A673 (cell line): ENCODE measurements at regions of chr7 and their contacts with region 1.

Region 1: DNA sequence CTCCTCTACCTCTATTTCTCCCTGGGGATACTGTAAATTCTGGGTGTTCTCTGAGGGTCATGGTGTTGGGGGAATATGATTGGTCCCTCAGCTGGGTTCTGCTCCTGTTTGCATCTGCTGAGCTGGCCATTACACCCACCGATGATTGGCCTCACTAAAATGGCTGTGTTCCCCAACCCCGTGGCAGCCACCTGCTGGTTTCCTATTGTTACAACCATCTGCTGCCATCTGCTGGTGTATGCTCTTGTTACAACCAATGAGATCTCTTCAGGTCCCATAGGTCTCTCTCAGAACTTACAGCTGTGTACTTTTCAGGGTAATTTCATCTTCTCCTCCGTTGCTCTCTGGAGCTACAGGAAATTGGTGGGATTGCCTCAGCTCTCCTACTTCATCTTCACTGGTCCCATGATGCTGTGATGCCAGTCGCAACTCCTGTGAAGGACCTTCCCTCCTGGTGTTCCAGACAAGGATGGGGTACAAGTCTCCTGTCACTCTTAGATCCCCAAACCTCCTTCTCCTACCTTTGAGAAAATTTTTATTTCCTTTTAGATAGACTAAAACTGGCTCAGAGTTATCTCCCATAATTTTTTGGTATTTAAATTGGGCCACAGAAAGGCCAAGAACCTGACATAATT is 303.5 kb upstream of the SMIM30 start:
- DNase-seq: peak; percentile 86
- H3K4me3 ChIP-seq: no peak overlapping the region
- H3K27ac ChIP-seq: no peak overlapping the region
- H3K4me1 ChIP-seq: peaks cover 3% of the 10 kb centered on the region
- H3K27me3 ChIP-seq: no peaks in the 10 kb centered on the region
- CTCF ChIP-seq: peak; percentile 82

Region 2: GRCh38 chr7:112550468-112551060 is 871.2 kb before region 1 on chr7:
- CTCF ChIA-PET with region 1: interaction called, 6 read pairs
- POLR2A ChIA-PET with region 1: no interaction called
- intact Hi-C with region 1: loop called (anchors 2 kb)
- DNase-seq: peak; percentile 76
- H3K4me3 ChIP-seq: no peak overlapping the region
- H3K27ac ChIP-seq: no peak overlapping the region
- H3K4me1 ChIP-seq: no peaks in the 10 kb centered on the region
- H3K27me3 ChIP-seq: peaks cover 14% of the 10 kb centered on the region
- CTCF ChIP-seq: peak; percentile 94

Region 3: DNA sequence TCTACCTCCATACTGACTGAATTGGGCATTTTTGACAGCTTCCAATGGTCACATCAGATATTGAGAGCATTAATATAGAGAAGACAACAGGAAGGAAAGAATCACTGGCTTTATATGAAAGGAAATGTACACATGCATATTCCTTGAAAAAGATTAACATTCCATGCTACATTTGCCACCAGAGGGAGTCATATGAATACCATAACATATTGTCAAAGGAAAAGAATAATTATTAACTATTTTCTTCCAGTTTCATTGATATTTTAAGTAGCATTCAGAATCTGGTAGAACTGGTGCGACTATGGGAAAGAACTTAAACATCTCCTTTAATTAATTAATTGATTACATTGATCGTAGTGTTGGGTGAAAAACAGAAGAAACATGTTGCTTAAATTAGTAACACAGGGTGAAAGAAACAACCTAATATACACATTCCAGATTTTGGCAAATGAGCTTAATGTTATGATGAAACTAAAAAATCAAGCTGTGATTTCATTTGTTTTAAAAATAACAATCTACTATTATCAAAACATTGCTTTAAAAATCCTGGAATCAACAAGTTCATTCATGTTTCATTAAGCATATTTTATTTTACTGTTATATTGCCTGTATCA is 406.7 kb before region 1 on chr7:
- CTCF ChIA-PET with region 1: no interaction called
- POLR2A ChIA-PET with region 1: no interaction called
- intact Hi-C with region 1: loop called (anchors 1 kb)
- DNase-seq: peak; percentile 15
- H3K4me3 ChIP-seq: no peak overlapping the region
- H3K27ac ChIP-seq: no peak overlapping the region
- H3K4me1 ChIP-seq: no peaks in the 10 kb centered on the region
- H3K27me3 ChIP-seq: no peaks in the 10 kb centered on the region
- CTCF ChIP-seq: peak; percentile 59

Region 4: DNA sequence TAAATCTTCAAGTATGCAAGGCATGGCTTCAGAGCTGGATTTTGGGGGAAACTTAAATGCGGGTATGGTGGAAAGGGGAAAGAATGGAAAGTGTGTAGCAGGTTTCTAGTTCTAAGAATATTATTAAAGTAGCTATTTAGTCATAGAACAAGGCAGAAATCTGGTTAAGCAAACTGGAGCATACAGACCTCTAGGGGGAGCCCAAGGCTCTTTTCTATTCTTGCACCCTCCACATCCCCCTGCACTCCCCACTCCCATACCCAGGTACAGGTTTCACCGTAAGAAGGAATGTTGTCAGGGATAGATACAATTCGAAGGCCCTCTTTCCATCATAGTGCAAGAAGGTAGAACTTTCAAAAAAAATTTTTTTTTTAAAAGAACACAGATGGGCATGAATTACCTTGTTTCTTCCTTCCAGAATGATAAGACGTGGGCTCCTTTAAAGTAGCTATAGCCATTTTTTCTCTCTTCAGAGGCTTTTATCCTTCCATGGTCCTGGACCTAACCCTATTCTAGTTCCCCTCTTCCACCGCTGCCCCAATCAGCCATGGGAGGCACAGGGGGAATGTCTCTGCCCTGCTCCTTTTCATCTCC is 262.0 kb before region 1 on chr7:
- CTCF ChIA-PET with region 1: interaction called, 5 read pairs
- POLR2A ChIA-PET with region 1: no interaction called
- intact Hi-C with region 1: loop called (anchors 2 kb)
- DNase-seq: peak; percentile 49
- H3K4me3 ChIP-seq: no peak overlapping the region
- H3K27ac ChIP-seq: no peak overlapping the region
- H3K4me1 ChIP-seq: no peaks in the 10 kb centered on the region
- H3K27me3 ChIP-seq: peaks cover 5% of the 10 kb centered on the region
- CTCF ChIP-seq: peak; percentile 73

Region 5: DNA sequence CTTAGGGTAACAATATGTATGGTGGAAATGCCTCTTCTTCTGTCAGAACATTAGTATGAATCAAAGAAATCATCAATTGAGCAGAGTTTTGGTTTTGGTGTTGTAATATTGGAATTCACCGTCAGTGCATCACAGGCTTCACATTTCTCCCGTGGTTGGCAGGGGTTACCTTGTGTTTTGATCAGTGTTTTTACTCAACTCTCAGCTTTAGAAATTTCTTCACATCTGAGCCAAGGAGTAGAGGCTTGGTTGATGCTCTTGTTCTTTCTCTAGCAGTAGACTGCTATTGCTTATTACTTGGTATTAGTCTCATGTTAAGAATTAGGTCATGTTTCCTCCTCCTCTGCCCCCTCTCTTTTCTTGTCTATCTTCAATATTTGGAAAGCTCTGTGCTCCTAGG is 114.7 kb before region 1 on chr7:
- CTCF ChIA-PET with region 1: no interaction called
- POLR2A ChIA-PET with region 1: no interaction called
- intact Hi-C with region 1: no loop called
- DNase-seq: no peak
- H3K4me3 ChIP-seq: no peak overlapping the region
- H3K27ac ChIP-seq: no peak overlapping the region
- H3K4me1 ChIP-seq: no peaks in the 10 kb centered on the region
- H3K27me3 ChIP-seq: peaks cover 4% of the 10 kb centered on the region
- CTCF ChIP-seq: no peak